Dorsolateral prefrontal cortex (tissue), 120 donors: ENCODE measurements at regions of chr17 and their contacts with region 1.

Region 1: DNA sequence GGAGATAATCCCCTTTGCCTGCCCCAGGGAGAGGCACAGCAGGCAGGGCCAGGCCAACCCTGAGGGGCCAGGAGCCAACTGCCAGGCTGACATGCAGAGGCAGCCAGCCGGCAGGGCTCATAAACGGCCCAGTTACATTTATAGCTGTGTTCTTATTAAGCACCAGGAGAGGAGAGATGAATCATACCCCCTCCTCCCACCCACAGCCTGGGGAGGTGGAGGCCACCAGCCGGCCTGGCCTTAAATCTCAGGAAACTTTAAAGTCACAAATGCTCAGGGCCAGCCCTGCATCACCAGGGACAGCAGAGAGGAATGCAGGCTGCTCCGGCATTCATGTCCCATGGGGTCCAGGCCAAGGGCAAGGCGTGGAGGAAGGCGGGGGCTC is 177.2 kb downstream of the TMEM132E start:
- DNase-seq: peak in 1 of 10 donors; percentile 8
- H3K4me3 ChIP-seq: no peak overlapping the region
- H3K27ac ChIP-seq: no peak overlapping the region
- H3K27me3 ChIP-seq: no peaks in the 10 kb centered on the region
- CTCF ChIP-seq: no peak

Region 2: GRCh38 chr17:34511265-34511664 is 245.4 kb before region 1 on chr17:
- intact Hi-C with region 1: no loop called
- DNase-seq: peak in 1 of 10 donors; percentile 40
- H3K4me3 ChIP-seq: no peak overlapping the region
- H3K27ac ChIP-seq: no peak overlapping the region
- H3K27me3 ChIP-seq: peaks cover 0 to 24% (median 3%) of the 10 kb centered on the region in 45 donors
- CTCF ChIP-seq: no peak

Region 3: GRCh38 chr17:34658811-34659560 is 97.6 kb before region 1 on chr17:
- intact Hi-C with region 1: no loop called
- DNase-seq: peak in 1 of 10 donors; percentile 66
- H3K4me3 ChIP-seq: no peak overlapping the region
- H3K27ac ChIP-seq: no peak overlapping the region
- H3K27me3 ChIP-seq: peaks cover 0 to 5% (median 0%) of the 10 kb centered on the region in 45 donors
- CTCF ChIP-seq: no peak

Region 4: GRCh38 chr17:34692920-34693319 is 63.7 kb before region 1 on chr17:
- intact Hi-C with region 1: loop called in 1 of 2 experiments (anchors 10 kb)
- DNase-seq: no peak
- H3K4me3 ChIP-seq: no peak overlapping the region
- H3K27ac ChIP-seq: no peak overlapping the region
- H3K27me3 ChIP-seq: peaks cover 0 to 7% (median 0%) of the 10 kb centered on the region in 45 donors
- CTCF ChIP-seq: no peak